ENCODE measurements at regions of chr17 and their contacts with region 1.

Region 1: DNA sequence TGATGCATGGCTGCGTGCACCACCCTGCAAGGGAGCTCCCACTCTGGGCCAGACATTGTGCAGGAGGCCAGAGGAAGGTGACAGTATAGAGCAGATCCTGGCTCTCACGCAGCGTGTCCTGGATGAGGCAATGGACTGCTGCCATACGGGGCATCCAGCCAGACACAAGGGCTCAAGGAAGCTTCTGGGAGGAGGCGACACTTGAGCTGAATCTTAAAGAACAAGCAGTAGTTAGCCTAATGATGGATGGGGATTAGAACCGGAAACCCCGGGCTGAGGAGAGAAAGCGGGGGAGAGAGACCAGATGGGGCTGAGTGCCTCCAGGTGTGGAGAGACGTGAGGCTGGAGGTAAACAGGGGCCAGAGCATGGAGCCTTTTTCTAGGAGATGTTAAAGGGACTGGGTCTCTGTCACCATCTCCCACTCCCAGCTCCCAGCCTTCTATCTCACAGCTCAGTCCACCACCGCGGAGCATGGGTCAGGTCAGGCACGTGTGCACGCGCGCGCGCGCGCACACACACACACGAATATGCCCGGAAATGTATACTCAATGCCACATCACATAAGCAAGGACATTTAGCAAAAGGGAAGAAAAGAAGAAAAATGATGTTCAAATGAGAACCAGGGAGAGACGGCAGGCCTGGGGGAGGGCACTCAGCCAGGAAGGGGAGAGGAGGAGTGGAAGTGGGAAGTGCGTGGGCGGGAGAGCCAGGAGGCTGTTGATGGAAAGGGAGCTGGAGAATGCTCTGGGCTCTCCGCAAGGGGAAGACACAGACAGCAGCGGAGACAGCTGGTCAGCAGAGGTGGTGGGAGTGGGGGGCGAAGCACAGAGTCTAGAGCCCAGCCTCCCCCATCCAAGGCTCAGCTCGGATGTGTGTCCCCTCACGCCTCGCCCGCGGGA is 46.2 kb downstream of the CCDC42 start:
- DNase-seq: no peak
- ATAC-seq: no peak
- H3K4me3 Mint-ChIP-seq: no peak overlapping the region
- H3K27ac Mint-ChIP-seq: peak overlapping the region; percentile 36
- H3K4me1 Mint-ChIP-seq: peaks cover 32% of the 10 kb centered on the region
- H3K27me3 Mint-ChIP-seq: peaks cover 6% of the 10 kb centered on the region
- CTCF ChIP-seq: no peak

Region 2: DNA sequence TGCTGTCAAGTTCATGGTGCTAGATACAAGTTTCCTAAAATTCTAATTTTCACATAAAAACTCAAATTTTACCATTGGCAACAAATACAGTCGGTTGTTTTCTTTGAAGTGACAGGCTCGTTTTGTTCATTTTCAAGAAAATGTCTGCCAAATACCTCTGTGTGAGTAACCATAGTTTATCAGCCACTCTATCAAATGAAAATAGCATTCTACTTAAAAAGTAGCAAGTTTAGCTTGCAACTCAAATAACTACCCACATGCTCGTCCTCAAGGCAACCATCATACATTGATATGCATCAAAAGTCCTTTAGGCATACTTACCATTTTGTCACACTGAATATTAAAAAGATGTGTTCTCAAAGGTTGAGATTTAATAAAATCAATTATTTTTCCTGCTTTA is 79.6 kb before region 1 on chr17:
- CTCF ChIA-PET with region 1: no interaction called
- POLR2A ChIA-PET with region 1: no interaction called
- DNase-seq: no peak
- ATAC-seq: no peak
- H3K4me3 Mint-ChIP-seq: no peak overlapping the region
- H3K27ac Mint-ChIP-seq: no peak overlapping the region
- H3K4me1 Mint-ChIP-seq: peaks cover 24% of the 10 kb centered on the region
- H3K27me3 Mint-ChIP-seq: no peaks in the 10 kb centered on the region
- CTCF ChIP-seq: no peak

Region 3: GRCh38 chr17:8630802-8631553 is 67.4 kb before region 1 on chr17:
- CTCF ChIA-PET with region 1: interaction called, 14 read pairs
- POLR2A ChIA-PET with region 1: interaction called, 25 read pairs
- DNase-seq: peak; percentile 99
- ATAC-seq: peak; percentile 93
- H3K4me3 Mint-ChIP-seq: peak overlapping the region; percentile 97
- H3K27ac Mint-ChIP-seq: peak overlapping the region; percentile 92
- H3K4me1 Mint-ChIP-seq: peaks cover 26% of the 10 kb centered on the region
- H3K27me3 Mint-ChIP-seq: no peaks in the 10 kb centered on the region
- CTCF ChIP-seq: peak; percentile 18; the same call in 1 of the 2 replicates

Region 4: GRCh38 chr17:8745586-8746500 is 47.4 kb after region 1 on chr17:
- CTCF ChIA-PET with region 1: interaction called, 23 read pairs
- POLR2A ChIA-PET with region 1: interaction called, 5 read pairs
- DNase-seq: peak; percentile 76
- ATAC-seq: peak; percentile 83
- H3K4me3 Mint-ChIP-seq: peak overlapping the region; percentile 93
- H3K27ac Mint-ChIP-seq: no peak overlapping the region
- H3K4me1 Mint-ChIP-seq: peaks cover 4% of the 10 kb centered on the region; the same call in 1 of the 2 replicates
- H3K27me3 Mint-ChIP-seq: no peaks in the 10 kb centered on the region; the same call in 1 of the 2 replicates
- CTCF ChIP-seq: peak; percentile 99

Region 5: DNA sequence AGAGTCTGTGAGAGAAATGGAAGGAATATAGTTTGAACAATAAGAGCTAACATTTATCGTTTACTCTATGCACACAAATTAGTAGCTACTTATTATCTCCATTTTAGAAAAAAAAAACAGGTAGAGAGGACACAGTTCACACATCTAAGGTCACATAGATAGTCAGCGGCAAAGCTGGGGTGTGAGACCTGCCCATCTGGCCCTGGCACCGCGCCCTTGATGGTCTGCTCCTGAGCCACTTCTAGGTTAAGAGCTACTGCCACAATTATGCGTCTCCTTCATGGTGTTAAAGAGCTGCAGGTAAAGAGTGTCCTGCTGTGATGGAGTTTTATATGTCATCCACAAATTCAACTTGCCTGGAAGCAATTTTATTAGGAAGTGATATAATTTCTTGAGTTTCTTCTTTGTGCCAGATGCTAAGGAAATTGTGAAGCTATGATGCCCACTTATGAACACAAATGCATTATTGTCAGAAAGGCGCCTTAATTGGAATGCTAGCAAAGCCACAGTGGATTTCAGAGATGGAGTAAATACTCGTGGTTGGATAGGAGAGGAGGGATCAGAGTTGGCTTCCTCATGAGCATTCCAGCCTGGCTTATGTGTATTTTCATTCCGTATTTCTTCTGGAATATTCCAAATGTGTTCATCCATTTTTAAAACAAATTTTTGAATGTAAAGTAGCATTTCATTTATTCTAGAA is 122.0 kb after region 1 on chr17:
- CTCF ChIA-PET with region 1: no interaction called
- POLR2A ChIA-PET with region 1: no interaction called
- DNase-seq: no peak
- ATAC-seq: no peak
- H3K4me3 Mint-ChIP-seq: no peak overlapping the region
- H3K27ac Mint-ChIP-seq: no peak overlapping the region
- H3K4me1 Mint-ChIP-seq: 0 out of 2 replicates have a peak, but pooled peaks cover 2% of the 10 kb centered on the region
- H3K27me3 Mint-ChIP-seq: no peaks in the 10 kb centered on the region; the same call in 1 of the 2 replicates
- CTCF ChIP-seq: no peak

Measured in WTC11 (cell line).